ENCODE measurements at regions of chr2 and their contacts with region 1.

Region 1: GRCh38 chr2:17672583-17673317 is 80.9 kb downstream of the SMC6 start:
- DNase-seq: no peak
- H3K4me3 Mint-ChIP-seq: no peak overlapping the region
- H3K27ac Mint-ChIP-seq: no peak overlapping the region
- H3K4me1 Mint-ChIP-seq: no peaks in the 10 kb centered on the region
- H3K27me3 Mint-ChIP-seq: no peaks in the 10 kb centered on the region
- CTCF ChIP-seq: no peak

Region 2: GRCh38 chr2:16773080-16773713 is 899.6 kb before region 1 on chr2:
- CTCF ChIA-PET with region 1: interaction called, 5 read pairs
- intact Hi-C with region 1: loop called (anchors 1 kb)
- DNase-seq: peak; percentile 48
- H3K4me3 Mint-ChIP-seq: no peak overlapping the region
- H3K27ac Mint-ChIP-seq: no peak overlapping the region
- H3K4me1 Mint-ChIP-seq: no peaks in the 10 kb centered on the region
- H3K27me3 Mint-ChIP-seq: peaks cover 71% of the 10 kb centered on the region
- CTCF ChIP-seq: peak; percentile 23

Region 3: GRCh38 chr2:17309741-17310339 is 362.9 kb before region 1 on chr2:
- CTCF ChIA-PET with region 1: no interaction called
- intact Hi-C with region 1: loop called (anchors 10 kb)
- DNase-seq: peak; percentile 64
- H3K4me3 Mint-ChIP-seq: no peak overlapping the region
- H3K27ac Mint-ChIP-seq: no peak overlapping the region
- H3K4me1 Mint-ChIP-seq: no peaks in the 10 kb centered on the region
- H3K27me3 Mint-ChIP-seq: peaks cover 20% of the 10 kb centered on the region
- CTCF ChIP-seq: peak; percentile 48

Region 4: DNA sequence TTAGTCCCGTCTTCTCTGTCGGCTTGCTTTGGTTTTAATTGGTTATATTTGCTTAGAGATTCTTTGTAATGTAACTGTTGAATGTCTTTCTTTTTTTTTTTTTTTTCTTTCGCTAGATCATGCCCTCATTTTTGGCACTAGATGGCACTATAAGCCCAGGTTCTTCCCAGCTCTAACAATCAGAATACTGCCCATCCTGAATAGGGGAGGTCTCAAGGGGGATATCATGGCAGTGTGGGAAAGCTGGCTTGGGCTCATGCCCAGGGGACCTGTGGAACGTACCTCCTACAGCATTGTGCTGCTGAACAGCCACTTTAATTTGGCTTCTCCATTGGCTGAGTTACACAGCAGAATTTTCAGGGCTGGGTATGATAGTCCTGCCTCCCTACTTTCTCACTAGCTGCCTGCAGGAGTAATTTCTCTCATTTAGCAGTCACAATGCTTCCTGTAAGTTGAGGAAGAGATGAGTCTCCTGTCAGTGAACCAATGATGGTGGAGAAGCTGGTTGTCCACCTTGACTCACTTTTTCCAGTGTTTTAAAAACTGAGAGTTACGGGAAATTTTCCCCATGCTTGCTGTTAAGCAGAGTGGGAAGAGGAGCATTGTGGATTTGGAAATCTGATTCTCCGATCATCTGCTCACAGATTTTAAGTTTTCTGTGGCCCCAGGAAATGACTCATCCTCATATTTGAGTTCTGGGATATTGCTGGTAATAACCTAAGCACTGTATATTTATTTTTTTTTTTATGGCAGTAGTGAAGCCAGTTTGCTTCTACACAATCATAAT is 201.7 kb before region 1 on chr2:
- CTCF ChIA-PET with region 1: interaction called, 9 read pairs
- intact Hi-C with region 1: loop called (anchors 2 kb)
- DNase-seq: peak; percentile 1
- H3K4me3 Mint-ChIP-seq: no peak overlapping the region
- H3K27ac Mint-ChIP-seq: no peak overlapping the region
- H3K4me1 Mint-ChIP-seq: no peaks in the 10 kb centered on the region
- H3K27me3 Mint-ChIP-seq: no peaks in the 10 kb centered on the region
- CTCF ChIP-seq: peak; percentile 48

Region 5: DNA sequence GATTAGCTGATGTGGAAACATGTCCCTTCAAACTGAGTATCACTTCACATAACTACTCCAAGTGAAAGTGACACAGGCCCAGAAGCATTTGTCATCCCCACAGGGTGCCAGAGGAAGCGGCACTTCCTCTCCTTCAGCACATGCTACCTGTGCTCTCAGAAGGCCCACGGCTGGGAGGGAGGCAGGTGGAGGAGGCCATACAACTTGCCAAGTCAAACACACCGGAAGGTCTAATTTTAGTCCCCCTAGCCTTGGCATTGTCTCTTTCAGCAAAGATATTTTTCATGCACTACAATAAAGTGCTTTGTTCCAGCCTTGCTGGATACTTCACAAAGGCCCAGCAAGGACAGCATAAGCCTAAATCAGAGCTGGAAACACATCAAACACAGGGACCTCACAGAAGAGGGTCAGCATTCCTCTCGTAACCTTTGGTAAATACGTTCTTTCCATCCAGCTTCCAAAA is 94.3 kb before region 1 on chr2:
- CTCF ChIA-PET with region 1: no interaction called
- intact Hi-C with region 1: no loop called
- DNase-seq: no peak
- H3K4me3 Mint-ChIP-seq: no peak overlapping the region
- H3K27ac Mint-ChIP-seq: no peak overlapping the region
- H3K4me1 Mint-ChIP-seq: no peaks in the 10 kb centered on the region
- H3K27me3 Mint-ChIP-seq: peaks cover 37% of the 10 kb centered on the region
- CTCF ChIP-seq: no peak

Region 6: GRCh38 chr2:17646081-17646554 is 26.6 kb before region 1 on chr2:
- CTCF ChIA-PET with region 1: interaction called, 12 read pairs
- intact Hi-C with region 1: no loop called
- DNase-seq: peak; percentile 60
- H3K4me3 Mint-ChIP-seq: no peak overlapping the region
- H3K27ac Mint-ChIP-seq: no peak overlapping the region
- H3K4me1 Mint-ChIP-seq: peaks cover 10% of the 10 kb centered on the region
- H3K27me3 Mint-ChIP-seq: no peaks in the 10 kb centered on the region
- CTCF ChIP-seq: peak; percentile 65

Measured in Calu3 (cell line).